Caco-2 (cell line): ENCODE measurements at regions of chr3 and their contacts with region 1.

Region 1: DNA sequence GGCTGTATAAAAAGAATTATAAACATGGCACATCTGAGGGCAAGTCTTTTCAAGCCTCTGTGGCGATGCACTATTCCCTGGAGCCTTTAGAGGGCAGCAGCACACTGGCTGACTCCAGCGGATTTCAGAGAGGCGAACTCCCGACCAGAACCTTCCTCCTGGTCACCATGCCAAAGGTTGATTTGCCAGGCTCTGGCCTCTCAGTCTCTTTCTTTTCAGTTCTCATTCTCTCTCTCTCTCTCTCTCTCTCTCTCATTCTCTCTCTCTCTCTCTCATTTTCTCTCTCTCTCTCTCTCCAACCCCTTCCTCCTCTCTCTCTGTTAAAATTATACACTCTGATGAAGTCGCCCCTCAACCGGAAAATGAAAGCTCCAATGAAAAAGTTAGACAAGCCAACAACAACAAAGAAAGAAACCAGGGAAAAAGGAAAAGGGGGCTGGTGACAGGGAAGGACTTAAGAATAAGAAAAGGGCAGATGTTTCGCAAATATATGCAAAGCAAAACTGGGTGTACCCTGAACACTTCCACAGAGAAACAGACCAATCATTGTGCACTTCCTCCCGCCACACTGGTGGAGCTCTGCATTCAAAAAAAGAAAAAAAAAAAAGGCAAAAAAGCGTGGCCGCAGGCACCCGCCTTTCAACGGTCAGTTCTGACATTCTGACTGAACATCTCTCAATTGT is 90.2 kb downstream of the TIGIT start:
- DNase-seq: peak; percentile 72 to 74
- H3K4me3 ChIP-seq: no peak overlapping the region
- H3K4me3 Mint-ChIP-seq: no peak overlapping the region
- H3K27ac Mint-ChIP-seq: no peak overlapping the region
- H3K4me1 ChIP-seq: peaks cover 45% of the 10 kb centered on the region
- H3K4me1 Mint-ChIP-seq: no peaks in the 10 kb centered on the region
- H3K27me3 ChIP-seq: no peaks in the 10 kb centered on the region
- H3K27me3 Mint-ChIP-seq: no peaks in the 10 kb centered on the region
- CTCF ChIP-seq: peak; percentile 55 to 83

Region 2: GRCh38 chr3:113707835-113708234 is 676.2 kb before region 1 on chr3:
- CTCF ChIA-PET with region 1: no interaction called
- POLR2A ChIA-PET with region 1: no interaction called
- intact Hi-C with region 1: no loop called
- DNase-seq: no peak
- H3K4me3 ChIP-seq: no peak overlapping the region
- H3K4me3 Mint-ChIP-seq: no peak overlapping the region
- H3K27ac Mint-ChIP-seq: no peak overlapping the region
- H3K4me1 ChIP-seq: no peaks in the 10 kb centered on the region
- H3K4me1 Mint-ChIP-seq: peaks cover 6% of the 10 kb centered on the region
- H3K27me3 ChIP-seq: no peaks in the 10 kb centered on the region
- H3K27me3 Mint-ChIP-seq: no peaks in the 10 kb centered on the region
- CTCF ChIP-seq: no peak

Region 3: GRCh38 chr3:113985541-113985940 is 398.5 kb before region 1 on chr3:
- CTCF ChIA-PET with region 1: no interaction called
- POLR2A ChIA-PET with region 1: no interaction called
- intact Hi-C with region 1: no loop called
- DNase-seq: no peak
- H3K4me3 ChIP-seq: no peak overlapping the region
- H3K4me3 Mint-ChIP-seq: no peak overlapping the region
- H3K27ac Mint-ChIP-seq: no peak overlapping the region
- H3K4me1 ChIP-seq: no peaks in the 10 kb centered on the region
- H3K4me1 Mint-ChIP-seq: no peaks in the 10 kb centered on the region
- H3K27me3 ChIP-seq: no peaks in the 10 kb centered on the region
- H3K27me3 Mint-ChIP-seq: no peaks in the 10 kb centered on the region
- CTCF ChIP-seq: no peak

Region 4: GRCh38 chr3:114362815-114363214 is 21.2 kb before region 1 on chr3:
- CTCF ChIA-PET with region 1: interaction called, 4 read pairs
- POLR2A ChIA-PET with region 1: no interaction called
- intact Hi-C with region 1: loop called (anchors 2 kb)
- DNase-seq: peak in 1 of 2 experiments; percentile 13
- H3K4me3 ChIP-seq: no peak overlapping the region
- H3K4me3 Mint-ChIP-seq: no peak overlapping the region
- H3K27ac Mint-ChIP-seq: peak overlapping the region; percentile 72
- H3K4me1 ChIP-seq: no peaks in the 10 kb centered on the region
- H3K4me1 Mint-ChIP-seq: peaks cover 11% of the 10 kb centered on the region
- H3K27me3 ChIP-seq: no peaks in the 10 kb centered on the region
- H3K27me3 Mint-ChIP-seq: no peaks in the 10 kb centered on the region
- CTCF ChIP-seq: peak; percentile 36 to 42

Region 5: DNA sequence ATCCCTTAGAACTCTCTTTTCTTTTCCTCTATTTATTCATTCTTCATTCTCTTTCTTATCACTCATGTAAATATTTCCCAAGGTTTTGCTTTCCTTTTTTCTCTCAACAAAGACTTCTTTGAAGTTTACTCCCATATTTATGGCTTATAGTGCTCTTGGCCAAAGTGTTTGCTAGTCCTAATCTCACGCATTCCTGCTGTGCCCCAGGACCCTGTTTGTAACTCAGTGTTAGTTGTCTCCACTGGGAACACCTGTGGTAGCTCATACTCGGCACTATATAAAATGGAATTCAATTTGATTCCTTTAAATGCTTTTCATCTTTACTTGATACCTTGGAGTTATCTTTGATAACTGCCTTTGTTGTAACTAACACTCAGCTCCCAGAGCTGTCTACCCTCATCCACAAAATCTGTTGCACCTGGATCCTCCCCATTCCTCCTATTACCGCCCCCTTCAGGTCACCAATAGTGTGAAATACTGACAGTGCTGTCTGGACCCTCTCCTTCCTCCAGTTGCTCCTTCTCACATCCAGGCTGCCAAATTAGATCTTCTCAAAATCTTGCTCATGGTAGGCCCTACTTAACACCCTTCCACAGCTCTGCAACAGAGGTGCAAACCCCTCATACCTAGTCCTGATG is 13.4 kb before region 1 on chr3:
- CTCF ChIA-PET with region 1: interaction called, 6 read pairs
- POLR2A ChIA-PET with region 1: interaction called, 7 read pairs
- intact Hi-C with region 1: loop called (anchors 1 kb)
- DNase-seq: peak; percentile 67 to 73
- H3K4me3 ChIP-seq: no peak overlapping the region
- H3K4me3 Mint-ChIP-seq: peak overlapping the region; percentile 6
- H3K27ac Mint-ChIP-seq: peak overlapping the region; percentile 39
- H3K4me1 ChIP-seq: peaks cover 49% of the 10 kb centered on the region
- H3K4me1 Mint-ChIP-seq: peaks cover 31% of the 10 kb centered on the region
- H3K27me3 ChIP-seq: no peaks in the 10 kb centered on the region
- H3K27me3 Mint-ChIP-seq: no peaks in the 10 kb centered on the region
- CTCF ChIP-seq: peak; percentile 33 to 53

Region 6: GRCh38 chr3:114418724-114419543 is 34.9 kb after region 1 on chr3:
- CTCF ChIA-PET with region 1: interaction called, 13 read pairs
- POLR2A ChIA-PET with region 1: interaction called, 3 read pairs
- intact Hi-C with region 1: loop called (anchors 1 kb)
- DNase-seq: peak in 1 of 2 experiments; percentile 57
- H3K4me3 ChIP-seq: no peak overlapping the region
- H3K4me3 Mint-ChIP-seq: no peak overlapping the region
- H3K27ac Mint-ChIP-seq: no peak overlapping the region
- H3K4me1 ChIP-seq: peaks cover 5% of the 10 kb centered on the region; the same call in 1 of the 2 replicates
- H3K4me1 Mint-ChIP-seq: no peaks in the 10 kb centered on the region
- H3K27me3 ChIP-seq: no peaks in the 10 kb centered on the region
- H3K27me3 Mint-ChIP-seq: no peaks in the 10 kb centered on the region
- CTCF ChIP-seq: peak; percentile 70

Region 7: GRCh38 chr3:114756506-114757279 is 372.7 kb after region 1 on chr3:
- CTCF ChIA-PET with region 1: no interaction called
- POLR2A ChIA-PET with region 1: no interaction called
- intact Hi-C with region 1: loop called (anchors 5 kb)
- DNase-seq: no peak
- H3K4me3 ChIP-seq: no peak overlapping the region
- H3K4me3 Mint-ChIP-seq: no peak overlapping the region
- H3K27ac Mint-ChIP-seq: no peak overlapping the region
- H3K4me1 ChIP-seq: no peaks in the 10 kb centered on the region; the same call in 1 of the 2 replicates
- H3K4me1 Mint-ChIP-seq: no peaks in the 10 kb centered on the region
- H3K27me3 ChIP-seq: no peaks in the 10 kb centered on the region
- H3K27me3 Mint-ChIP-seq: no peaks in the 10 kb centered on the region
- CTCF ChIP-seq: no peak

Region 8: GRCh38 chr3:115092220-115092791 is 708.3 kb after region 1 on chr3:
- CTCF ChIA-PET with region 1: no interaction called
- POLR2A ChIA-PET with region 1: no interaction called
- intact Hi-C with region 1: loop called (anchors 5 kb)
- DNase-seq: peak; percentile 53 to 56
- H3K4me3 ChIP-seq: no peak overlapping the region
- H3K4me3 Mint-ChIP-seq: no peak overlapping the region
- H3K27ac Mint-ChIP-seq: no peak overlapping the region
- H3K4me1 ChIP-seq: no peaks in the 10 kb centered on the region
- H3K4me1 Mint-ChIP-seq: no peaks in the 10 kb centered on the region
- H3K27me3 ChIP-seq: no peaks in the 10 kb centered on the region
- H3K27me3 Mint-ChIP-seq: peaks cover 5% of the 10 kb centered on the region
- CTCF ChIP-seq: peak; percentile 49 to 68